Activated CD4-positive, alpha-beta T cell treated with anti-CD3 and anti-CD28 coated beads, Interleukin-2, amount 10 ng/mL, durations not matched to agents 24 days and 14 days (primary cell): ENCODE measurements at regions of chr2 and their contacts with region 1.

Region 1: GRCh38 chr2:110843959-110844510 is 111.7 kb downstream of the ACOXL start:
- DNase-seq: no peak
- H3K4me3 Mint-ChIP-seq: peak overlapping the region; percentile 4
- H3K27ac Mint-ChIP-seq: peak overlapping the region; percentile 81
- H3K4me1 Mint-ChIP-seq: peaks cover 52% of the 10 kb centered on the region
- H3K27me3 Mint-ChIP-seq: peaks cover 21% of the 10 kb centered on the region

Region 2: DNA sequence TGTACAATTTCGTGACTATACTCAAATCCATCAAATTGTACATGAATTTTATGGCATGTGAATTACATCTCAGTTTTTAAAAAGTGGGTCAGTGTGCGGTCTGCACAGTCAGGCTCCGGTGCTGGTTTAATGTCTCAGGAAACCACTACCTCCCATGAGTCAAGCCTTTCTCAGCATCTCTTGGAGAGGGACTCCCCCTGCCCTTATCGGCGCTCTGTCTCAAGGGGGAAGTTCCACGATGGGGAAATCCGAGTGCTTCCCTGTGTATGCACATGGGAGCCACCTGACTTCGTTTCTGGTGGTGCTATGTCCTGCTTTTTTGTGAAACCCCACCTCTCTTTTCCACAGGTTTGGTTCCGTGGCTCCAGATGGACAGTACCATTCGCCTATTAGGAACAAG is 39.1 kb before region 1 on chr2:
- intact Hi-C with region 1: loop called (anchors 1 kb)
- DNase-seq: peak; percentile 82
- H3K4me3 Mint-ChIP-seq: peak overlapping the region; percentile 12
- H3K27ac Mint-ChIP-seq: peak overlapping the region; percentile 18
- H3K4me1 Mint-ChIP-seq: peaks cover 17% of the 10 kb centered on the region
- H3K27me3 Mint-ChIP-seq: peaks cover 55% of the 10 kb centered on the region

Region 3: GRCh38 chr2:110812726-110813645 is 31.0 kb before region 1 on chr2:
- intact Hi-C with region 1: loop called (anchors 1 kb)
- DNase-seq: peak; percentile 53
- H3K4me3 Mint-ChIP-seq: no peak overlapping the region
- H3K27ac Mint-ChIP-seq: no peak overlapping the region
- H3K4me1 Mint-ChIP-seq: peaks cover 19% of the 10 kb centered on the region
- H3K27me3 Mint-ChIP-seq: peaks cover 31% of the 10 kb centered on the region

Region 4: GRCh38 chr2:110903548-110903947 is 59.5 kb after region 1 on chr2:
- intact Hi-C with region 1: no loop called
- DNase-seq: no peak
- H3K4me3 Mint-ChIP-seq: no peak overlapping the region
- H3K27ac Mint-ChIP-seq: no peak overlapping the region
- H3K4me1 Mint-ChIP-seq: peaks cover 2% of the 10 kb centered on the region
- H3K27me3 Mint-ChIP-seq: peaks cover 21% of the 10 kb centered on the region

Region 5: DNA sequence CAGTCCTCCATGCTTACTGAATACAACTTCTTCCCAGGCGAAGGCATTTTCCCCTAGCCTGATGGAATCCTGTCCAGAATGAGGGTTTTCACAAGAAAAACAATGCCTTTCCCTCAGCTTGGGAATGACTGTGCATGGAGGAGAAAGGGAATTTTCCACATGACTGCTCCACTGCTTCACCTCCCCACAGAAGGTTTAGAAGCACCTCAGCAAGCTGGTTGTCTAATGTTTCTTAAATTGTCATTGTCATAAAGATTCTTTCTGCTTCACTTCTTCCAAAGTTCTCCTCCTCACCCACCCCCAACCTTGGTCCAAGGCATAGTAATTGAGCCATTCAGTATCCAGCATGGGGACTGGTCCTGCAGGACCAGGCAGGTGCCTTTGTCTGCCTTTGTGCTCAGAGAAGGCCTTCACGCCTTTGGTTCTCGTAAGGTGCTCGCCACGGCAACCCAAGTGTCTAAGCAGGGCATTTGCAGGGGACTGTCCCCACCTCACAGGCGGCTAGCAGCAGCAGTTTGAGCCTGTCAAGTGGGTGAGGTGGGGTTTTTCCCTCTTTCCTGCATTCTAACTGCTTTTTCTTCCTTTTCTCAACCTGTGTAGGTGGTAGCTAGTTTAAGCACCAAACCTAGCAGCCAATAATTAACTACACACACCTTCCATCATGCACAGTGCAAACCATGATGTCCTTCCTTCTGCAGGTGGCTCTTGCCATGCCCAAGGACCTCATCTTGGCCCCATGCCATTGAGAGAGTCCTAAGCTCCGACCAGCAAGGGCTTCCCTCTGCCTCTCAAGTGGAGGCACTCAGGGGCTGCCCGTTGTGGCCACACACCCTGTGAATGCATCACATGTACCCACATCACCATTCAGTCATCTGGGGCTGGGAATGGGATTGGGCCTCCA is 211.0 kb after region 1 on chr2:
- intact Hi-C with region 1: loop called (anchors 5 kb)
- DNase-seq: peak; percentile 61
- H3K4me3 Mint-ChIP-seq: peak overlapping the region; percentile 50
- H3K27ac Mint-ChIP-seq: peak overlapping the region; percentile 71
- H3K4me1 Mint-ChIP-seq: peaks cover 30% of the 10 kb centered on the region
- H3K27me3 Mint-ChIP-seq: peaks cover 41% of the 10 kb centered on the region

Region 6: GRCh38 chr2:111209045-111209514 is 365.0 kb after region 1 on chr2:
- intact Hi-C with region 1: loop called (anchors 10 kb)
- DNase-seq: peak; percentile 84
- H3K4me3 Mint-ChIP-seq: peak overlapping the region; percentile 19
- H3K27ac Mint-ChIP-seq: peak overlapping the region; percentile 76
- H3K4me1 Mint-ChIP-seq: peaks cover 35% of the 10 kb centered on the region
- H3K27me3 Mint-ChIP-seq: peaks cover 3% of the 10 kb centered on the region